WTC11 (cell line): ENCODE measurements at regions of chr7 and their contacts with region 1.

Region 1: GRCh38 chr7:54839538-54840213 is 80.7 kb upstream of the SEC61G start:
- DNase-seq: peak; percentile 78
- ATAC-seq: peak; percentile 98
- H3K4me3 Mint-ChIP-seq: no peak overlapping the region
- H3K27ac Mint-ChIP-seq: no peak overlapping the region
- H3K4me1 Mint-ChIP-seq: peaks cover 12% of the 10 kb centered on the region
- H3K27me3 Mint-ChIP-seq: no peaks in the 10 kb centered on the region
- CTCF ChIP-seq: peak; percentile 45; the same call in 1 of the 2 replicates

Region 2: DNA sequence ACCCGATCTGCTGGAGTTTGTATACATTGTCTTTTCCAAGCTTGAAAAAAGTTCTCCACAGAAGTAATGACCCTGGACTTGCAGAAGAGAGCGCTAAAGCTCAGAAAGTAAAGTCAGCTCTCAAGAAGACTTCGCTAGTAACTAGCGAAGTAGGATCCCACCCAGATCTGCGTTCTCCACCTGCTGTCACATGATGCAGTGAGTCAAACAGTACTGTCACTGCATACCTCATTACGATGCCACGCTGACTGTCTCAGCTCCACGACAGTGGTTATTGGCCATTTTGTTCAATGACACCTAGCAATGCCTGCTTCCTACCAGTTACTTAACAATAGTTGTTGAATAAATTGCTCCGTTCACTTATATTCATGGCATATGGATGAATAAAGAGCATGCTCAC is 51.0 kb before region 1 on chr7:
- CTCF ChIA-PET with region 1: interaction called, 21 read pairs
- POLR2A ChIA-PET with region 1: interaction called, 3 read pairs
- DNase-seq: peak; percentile 40
- ATAC-seq: peak; percentile 94
- H3K4me3 Mint-ChIP-seq: no peak overlapping the region
- H3K27ac Mint-ChIP-seq: no peak overlapping the region
- H3K4me1 Mint-ChIP-seq: peaks cover 4% of the 10 kb centered on the region
- H3K27me3 Mint-ChIP-seq: peaks cover 18% of the 10 kb centered on the region
- CTCF ChIP-seq: 0 out of 2 replicates have a peak, but pooled peaks have one; percentile 16

Region 3: DNA sequence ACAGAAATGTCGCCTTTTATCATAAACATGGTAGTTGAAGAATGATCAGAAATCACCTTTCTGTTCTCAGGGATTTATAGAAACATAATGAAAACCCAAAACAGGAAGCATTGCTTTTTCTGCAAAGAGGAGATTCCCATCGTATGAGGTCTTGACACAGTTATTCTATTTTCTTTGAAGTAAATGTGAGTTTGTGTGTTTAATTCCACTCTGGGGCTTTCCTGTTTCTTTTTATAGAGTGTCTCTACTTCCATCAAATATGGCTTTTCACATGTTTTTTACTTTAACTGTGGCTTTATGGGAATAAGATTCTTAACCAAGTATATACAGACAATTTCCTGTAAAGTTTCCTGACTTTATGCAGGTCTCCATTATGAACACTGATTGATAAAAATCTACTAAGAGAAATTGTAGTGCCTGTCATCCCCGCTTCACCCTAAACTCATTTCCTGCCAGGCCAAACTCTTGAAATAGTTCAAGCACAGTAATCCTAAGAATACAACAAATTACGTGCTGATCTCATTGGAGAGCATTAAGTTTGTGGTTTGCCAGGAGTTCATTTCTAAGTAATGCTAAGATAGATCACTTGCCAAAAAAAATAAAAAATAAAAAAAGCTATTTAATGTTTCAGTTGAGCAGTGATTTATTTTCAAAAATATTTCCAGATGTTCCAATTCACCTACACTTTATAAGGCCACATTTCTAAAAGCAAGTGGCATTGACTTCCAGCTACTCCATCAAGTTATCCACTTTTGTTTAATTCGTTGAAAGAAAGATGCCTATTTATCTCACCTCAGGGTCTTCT is 28.4 kb before region 1 on chr7:
- CTCF ChIA-PET with region 1: no interaction called
- POLR2A ChIA-PET with region 1: no interaction called
- DNase-seq: no peak
- ATAC-seq: no peak
- H3K4me3 Mint-ChIP-seq: no peak overlapping the region
- H3K27ac Mint-ChIP-seq: no peak overlapping the region
- H3K4me1 Mint-ChIP-seq: no peaks in the 10 kb centered on the region
- H3K27me3 Mint-ChIP-seq: no peaks in the 10 kb centered on the region; the same call in 1 of the 2 replicates
- CTCF ChIP-seq: no peak